GM23248 (cell line): ENCODE measurements at regions of chr3 and their contacts with region 1.

Region 1: GRCh38 chr3:42184651-42185443 is 81.1 kb downstream of the CCK start:
- DNase-seq: peak; percentile 87
- H3K4me3 ChIP-seq: no peak overlapping the region
- H3K27ac ChIP-seq: no peak overlapping the region
- H3K4me1 ChIP-seq: peaks cover 25% of the 10 kb centered on the region
- H3K27me3 ChIP-seq: no peaks in the 10 kb centered on the region

Region 2: DNA sequence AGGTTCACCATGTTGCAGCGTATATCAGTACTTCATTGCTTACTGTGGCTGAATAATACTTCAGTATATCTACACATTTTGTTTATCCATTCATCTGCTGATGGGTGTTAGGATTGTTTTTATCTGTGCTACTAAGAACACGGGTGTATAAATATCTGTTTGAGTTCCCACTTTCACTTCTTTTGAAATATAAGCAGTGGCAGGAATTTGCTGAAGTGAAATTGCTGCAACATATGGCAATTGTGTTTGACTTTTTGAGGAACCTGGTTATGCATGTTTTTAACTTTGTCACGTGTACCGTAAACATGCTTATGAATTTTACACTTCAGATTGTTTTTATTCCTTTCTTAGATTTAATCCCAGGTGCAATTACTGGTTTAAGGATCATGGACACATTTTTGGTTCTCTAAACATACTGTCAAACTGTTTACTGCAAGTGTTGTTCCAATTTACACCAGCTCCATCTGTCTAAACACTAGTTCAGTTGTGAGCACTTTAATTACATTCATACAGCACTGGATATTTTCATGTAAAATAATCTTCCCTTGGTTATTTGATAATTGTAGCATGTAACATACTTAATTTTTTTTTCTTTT is 70.6 kb before region 1 on chr3:
- in situ Hi-C with region 1: loop called (anchors 5 kb)
- DNase-seq: no peak
- H3K4me3 ChIP-seq: no peak overlapping the region
- H3K27ac ChIP-seq: no peak overlapping the region
- H3K4me1 ChIP-seq: peaks cover 21% of the 10 kb centered on the region
- H3K27me3 ChIP-seq: no peaks in the 10 kb centered on the region